CD4-positive, alpha-beta memory T cell (primary cell): ENCODE measurements at regions of chr4 and their contacts with region 1.

Region 1: DNA sequence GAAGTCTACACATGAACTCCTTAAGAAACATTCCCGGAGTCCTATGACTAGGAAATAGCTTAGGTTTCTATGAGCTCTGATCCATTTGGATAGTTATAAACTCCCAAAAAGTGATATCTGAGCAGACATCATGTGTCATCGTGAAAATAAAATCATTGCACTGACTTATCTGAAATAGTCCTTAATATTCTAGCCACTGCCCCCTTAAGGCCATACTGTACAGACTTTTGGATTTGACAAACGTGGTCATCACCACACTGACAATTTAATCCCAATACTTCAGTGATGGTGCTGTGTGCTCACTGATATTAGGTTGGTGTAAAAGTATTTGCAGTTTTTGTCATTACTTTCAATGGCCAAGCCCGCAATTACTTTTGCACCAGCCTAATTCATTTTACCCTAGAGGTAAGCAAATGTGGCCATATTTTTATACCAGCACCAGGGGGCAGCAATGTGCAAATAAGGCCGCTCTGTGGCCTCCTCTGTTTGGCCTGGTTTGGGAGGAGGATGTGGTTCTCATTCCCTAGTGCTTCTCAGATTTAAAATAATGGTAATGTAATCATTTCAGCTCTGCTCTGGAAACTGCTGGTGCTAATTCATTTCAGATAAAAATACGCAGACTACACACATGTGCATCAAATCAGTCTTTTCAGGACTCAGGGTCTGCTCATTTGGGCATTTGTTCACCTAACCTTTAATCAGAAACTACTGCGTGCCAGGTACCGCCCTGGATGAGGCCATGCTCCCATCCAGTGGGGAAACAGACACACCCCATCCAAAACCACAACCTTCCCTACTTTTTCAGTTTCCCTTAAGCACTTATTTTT is 196.4 kb upstream of the C1QTNF7 start:
- DNase-seq: peak; percentile 66 to 70 (median 67)
- H3K4me3 ChIP-seq: no peak overlapping the region
- H3K4me3 Mint-ChIP-seq: no peak overlapping the region
- H3K27ac ChIP-seq: no peak overlapping the region
- H3K27ac Mint-ChIP-seq: no peak overlapping the region
- H3K4me1 ChIP-seq: peaks cover 27% of the 10 kb centered on the region
- H3K4me1 Mint-ChIP-seq: peaks cover 18 to 32% (median 27%) of the 10 kb centered on the region in 4 donors
- H3K27me3 ChIP-seq: no peaks in the 10 kb centered on the region
- H3K27me3 Mint-ChIP-seq: no peaks in the 10 kb centered on the region

Region 2: GRCh38 chr4:15396157-15396800 is 164.8 kb after region 1 on chr4:
- CTCF ChIA-PET with region 1: interaction called, 31 read pairs
- POLR2A ChIA-PET with region 1: no interaction called
- intact Hi-C with region 1: loop called (anchors 1 kb)
- DNase-seq: peak; percentile 33 to 44 (median 38)
- H3K4me3 ChIP-seq: no peak overlapping the region
- H3K4me3 Mint-ChIP-seq: no peak overlapping the region
- H3K27ac ChIP-seq: no peak overlapping the region
- H3K27ac Mint-ChIP-seq: peak overlapping the region in 1 of 7 donors; percentile 22
- H3K4me1 ChIP-seq: peaks cover 12% of the 10 kb centered on the region
- H3K4me1 Mint-ChIP-seq: peaks cover 10 to 27% (median 22%) of the 10 kb centered on the region in 4 donors
- H3K27me3 ChIP-seq: no peaks in the 10 kb centered on the region
- H3K27me3 Mint-ChIP-seq: no peaks in the 10 kb centered on the region

Region 3: GRCh38 chr4:15457406-15458201 is 226.1 kb after region 1 on chr4:
- CTCF ChIA-PET with region 1: interaction called, 81 read pairs
- POLR2A ChIA-PET with region 1: interaction called, 5 read pairs
- intact Hi-C with region 1: no loop called
- DNase-seq: peak in 4 of 5 donors; percentile 38 to 42 (median 40)
- H3K4me3 ChIP-seq: no peak overlapping the region
- H3K4me3 Mint-ChIP-seq: no peak overlapping the region
- H3K27ac ChIP-seq: no peak overlapping the region
- H3K27ac Mint-ChIP-seq: no peak overlapping the region
- H3K4me1 ChIP-seq: no peaks in the 10 kb centered on the region
- H3K4me1 Mint-ChIP-seq: peaks cover 0 to 2% (median 0%) of the 10 kb centered on the region in 4 donors
- H3K27me3 ChIP-seq: no peaks in the 10 kb centered on the region
- H3K27me3 Mint-ChIP-seq: no peaks in the 10 kb centered on the region

Region 4: DNA sequence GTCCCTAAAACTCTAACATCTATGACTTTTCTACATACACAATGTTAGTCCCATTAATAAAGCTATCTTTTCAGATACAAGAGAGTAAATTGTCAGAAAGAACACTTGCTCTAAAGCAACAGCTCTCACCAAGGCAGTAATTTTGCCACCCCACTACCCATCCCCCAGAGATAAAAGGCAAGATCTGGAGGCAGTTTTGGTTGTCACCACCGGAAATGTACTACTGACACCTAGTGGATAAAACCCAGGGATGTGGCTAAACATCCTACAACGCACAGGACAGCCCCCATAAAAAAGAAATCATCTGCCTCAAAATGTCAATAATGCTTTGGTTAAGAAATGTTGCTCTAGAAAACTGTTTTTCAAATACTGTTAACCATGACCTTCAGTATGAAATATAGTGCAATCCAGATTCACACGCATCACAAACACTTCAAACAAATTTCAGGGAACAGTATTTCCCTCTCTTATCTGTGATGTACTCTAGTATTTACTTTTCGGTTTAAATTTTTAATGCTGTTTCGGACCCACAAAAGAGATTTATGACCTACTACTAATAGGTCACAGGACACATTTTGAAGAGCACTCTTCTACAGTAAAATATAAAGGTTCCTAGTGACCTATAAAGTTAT is 418.6 kb after region 1 on chr4:
- CTCF ChIA-PET with region 1: interaction called, 9 read pairs
- POLR2A ChIA-PET with region 1: interaction called, 11 read pairs
- intact Hi-C with region 1: loop called (anchors 1 kb)
- DNase-seq: peak; percentile 74 to 81 (median 75)
- H3K4me3 ChIP-seq: no peak overlapping the region
- H3K4me3 Mint-ChIP-seq: peak overlapping the region in 7 of 8 donors; percentile 1 to 75 (median 36)
- H3K27ac ChIP-seq: no peak overlapping the region
- H3K27ac Mint-ChIP-seq: peak overlapping the region in 6 of 7 donors; percentile 7 to 69 (median 38)
- H3K4me1 ChIP-seq: peaks cover 80% of the 10 kb centered on the region
- H3K4me1 Mint-ChIP-seq: peaks cover 43 to 80% (median 56%) of the 10 kb centered on the region in 4 donors
- H3K27me3 ChIP-seq: no peaks in the 10 kb centered on the region
- H3K27me3 Mint-ChIP-seq: no peaks in the 10 kb centered on the region

Region 5: DNA sequence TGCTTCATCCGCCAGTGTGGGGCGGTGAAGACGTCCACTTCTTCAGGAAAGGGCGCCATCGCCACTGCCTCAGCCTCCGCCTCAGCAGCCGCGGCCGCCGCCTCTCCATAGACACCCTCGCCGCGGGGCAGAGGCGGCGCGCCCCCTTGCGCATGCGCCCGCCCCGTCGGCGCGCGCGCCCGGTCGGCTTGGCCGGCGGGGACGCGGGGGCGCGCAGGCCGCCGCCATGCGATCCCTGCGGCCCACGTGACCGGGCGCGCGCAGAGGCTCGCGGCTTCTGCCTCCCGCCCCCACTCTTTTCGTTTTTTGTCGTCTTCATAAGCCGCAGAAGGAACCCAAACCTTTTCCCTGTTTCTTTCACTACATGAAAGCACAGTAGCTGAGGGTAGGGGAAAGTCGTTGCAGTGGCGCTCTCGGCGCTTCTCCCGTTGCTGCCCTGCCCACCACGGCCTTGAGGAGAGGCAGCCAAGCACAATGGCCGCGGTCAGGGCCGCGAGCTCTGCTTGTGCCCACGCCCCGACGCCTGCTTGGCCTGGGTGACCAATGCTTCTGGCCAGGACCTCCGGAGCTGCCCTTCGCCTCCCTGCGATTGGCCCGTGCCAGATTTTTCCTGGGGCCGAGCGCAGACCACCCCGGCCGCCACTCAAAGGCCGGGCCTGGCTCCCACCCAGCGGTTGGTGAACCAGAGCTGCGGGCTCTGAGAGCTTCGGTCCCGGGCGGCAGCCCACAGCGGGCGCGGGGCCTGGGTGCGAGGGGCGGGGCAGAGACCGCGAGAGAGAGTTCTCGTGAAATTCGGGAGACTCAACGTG is 424.0 kb after region 1 on chr4 and contains the start of gene FBXL5:
- CTCF ChIA-PET with region 1: interaction called, 9 read pairs
- POLR2A ChIA-PET with region 1: interaction called, 11 read pairs
- intact Hi-C with region 1: loop called (anchors 1 kb)
- DNase-seq: peak; percentile 79 to 91 (median 87)
- H3K4me3 ChIP-seq: peak within 1 kb of the TSS; percentile 37 to 94
- H3K4me3 Mint-ChIP-seq: peak within 1 kb of the TSS; percentile 94 to 98 (median 97)
- H3K27ac ChIP-seq: peak within 1 kb of the TSS; percentile 88
- H3K27ac Mint-ChIP-seq: peak within 1 kb of the TSS; percentile 96 to 99 (median 98)
- H3K4me1 ChIP-seq: peaks cover 45% of the 10 kb centered on the region
- H3K4me1 Mint-ChIP-seq: peaks cover 32 to 57% (median 38%) of the 10 kb centered on the region in 4 donors
- H3K27me3 ChIP-seq: no peaks in the 10 kb centered on the region
- H3K27me3 Mint-ChIP-seq: no peaks in the 10 kb centered on the region
- total RNA-seq, gene FBXL5: 62.2 to 62.8 TPM

Region 6: GRCh38 chr4:15681207-15682015 is 449.9 kb after region 1 on chr4 and contains the start of gene FAM200B:
- CTCF ChIA-PET with region 1: no interaction called
- POLR2A ChIA-PET with region 1: no interaction called
- intact Hi-C with region 1: loop called (anchors 1 kb)
- DNase-seq: peak; percentile 92 to 96 (median 93)
- H3K4me3 ChIP-seq: peak within 1 kb of the TSS; percentile 72 to 99
- H3K4me3 Mint-ChIP-seq: peak within 1 kb of the TSS; percentile 90 to 98 (median 96)
- H3K27ac ChIP-seq: peak within 1 kb of the TSS; percentile 70
- H3K27ac Mint-ChIP-seq: peak within 1 kb of the TSS; percentile 86 to 98 (median 97)
- H3K4me1 ChIP-seq: peaks cover 30% of the 10 kb centered on the region
- H3K4me1 Mint-ChIP-seq: peaks cover 26 to 46% (median 34%) of the 10 kb centered on the region in 4 donors
- H3K27me3 ChIP-seq: no peaks in the 10 kb centered on the region
- H3K27me3 Mint-ChIP-seq: no peaks in the 10 kb centered on the region
- total RNA-seq, gene FAM200B: 35.5 to 37.4 TPM

Region 7: GRCh38 chr4:16001484-16001858 is 770.0 kb after region 1 on chr4:
- CTCF ChIA-PET with region 1: no interaction called
- POLR2A ChIA-PET with region 1: no interaction called
- intact Hi-C with region 1: loop called (anchors 5 kb)
- DNase-seq: peak; percentile 31 to 43 (median 36)
- H3K4me3 ChIP-seq: no peak overlapping the region
- H3K4me3 Mint-ChIP-seq: no peak overlapping the region
- H3K27ac ChIP-seq: no peak overlapping the region
- H3K27ac Mint-ChIP-seq: no peak overlapping the region
- H3K4me1 ChIP-seq: no peaks in the 10 kb centered on the region
- H3K4me1 Mint-ChIP-seq: peaks cover 0 to 1% (median 0%) of the 10 kb centered on the region in 4 donors
- H3K27me3 ChIP-seq: no peaks in the 10 kb centered on the region
- H3K27me3 Mint-ChIP-seq: peaks cover 5 to 17% of the 10 kb centered on the region in 2 donors